ENCODE measurements at regions of chr17 and their contacts with region 1.

Region 1: DNA sequence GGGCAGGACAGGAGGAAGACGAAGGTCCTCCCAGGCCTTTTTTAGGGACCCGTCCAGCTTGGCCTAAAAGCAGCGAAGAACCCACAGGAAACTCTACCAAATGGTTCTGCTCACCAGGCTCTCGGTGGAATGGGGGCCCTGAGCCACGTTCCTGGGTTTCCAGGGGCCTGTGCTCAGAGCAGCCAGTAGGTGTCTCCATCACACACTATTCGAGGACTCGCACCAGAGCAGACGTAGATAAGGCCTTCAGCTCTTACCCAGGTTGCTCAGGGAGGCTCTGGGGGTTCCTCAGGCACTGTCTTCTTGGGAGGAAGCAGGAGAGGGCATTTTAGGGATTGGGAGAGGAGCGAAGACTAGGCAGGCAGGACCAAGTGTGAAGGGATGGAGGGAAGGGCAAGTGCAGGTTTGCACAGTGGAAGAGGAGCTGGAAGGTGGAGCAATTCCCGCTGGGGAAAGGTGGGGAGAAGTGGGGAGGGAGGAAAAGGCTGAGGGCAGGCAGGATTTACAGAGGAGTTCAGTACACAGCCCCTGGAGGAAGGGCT is 157.1 kb downstream of the RGS9 start:
- DNase-seq: peak; percentile 75
- H3K4me3 Mint-ChIP-seq: no peak overlapping the region
- H3K27ac Mint-ChIP-seq: no peak overlapping the region
- H3K4me1 Mint-ChIP-seq: peaks cover 6% of the 10 kb centered on the region
- H3K27me3 Mint-ChIP-seq: no peaks in the 10 kb centered on the region
- CTCF ChIP-seq: peak; percentile 67

Region 2: GRCh38 chr17:65463242-65463641 is 169.0 kb after region 1 on chr17:
- CTCF ChIA-PET with region 1: interaction called, 5 read pairs
- POLR2A ChIA-PET with region 1: no interaction called
- intact Hi-C with region 1: loop called (anchors 5 kb)
- DNase-seq: peak; percentile 88
- H3K4me3 Mint-ChIP-seq: peak overlapping the region; percentile 22
- H3K27ac Mint-ChIP-seq: peak overlapping the region; percentile 57
- H3K4me1 Mint-ChIP-seq: peaks cover 34% of the 10 kb centered on the region
- H3K27me3 Mint-ChIP-seq: no peaks in the 10 kb centered on the region
- CTCF ChIP-seq: no peak

Region 3: GRCh38 chr17:65556014-65556909 is 262.0 kb after region 1 on chr17:
- CTCF ChIA-PET with region 1: interaction called, 45 read pairs
- POLR2A ChIA-PET with region 1: no interaction called
- intact Hi-C with region 1: no loop called
- DNase-seq: peak; percentile 78
- H3K4me3 Mint-ChIP-seq: no peak overlapping the region
- H3K27ac Mint-ChIP-seq: no peak overlapping the region
- H3K4me1 Mint-ChIP-seq: no peaks in the 10 kb centered on the region
- H3K27me3 Mint-ChIP-seq: peaks cover 10% of the 10 kb centered on the region
- CTCF ChIP-seq: peak; percentile 84

Region 4: DNA sequence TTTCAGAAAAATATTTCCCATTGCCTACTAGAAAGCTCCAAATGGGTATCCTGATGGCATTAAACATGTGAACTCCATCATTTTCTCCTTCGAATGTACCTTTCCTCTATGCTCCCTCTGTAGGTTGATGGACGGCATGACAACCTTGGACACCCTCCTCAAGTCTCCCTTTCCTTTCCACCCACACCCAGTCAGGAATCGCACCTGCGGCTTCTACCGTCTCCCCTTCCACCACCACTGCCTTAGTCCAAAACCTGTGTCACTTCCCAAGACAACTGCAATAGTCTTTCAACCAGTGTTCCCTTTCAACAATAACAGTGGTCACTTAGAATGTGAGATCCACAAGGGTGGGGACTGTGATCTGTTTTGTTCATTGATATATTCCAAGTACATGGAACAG is 500.3 kb after region 1 on chr17:
- CTCF ChIA-PET with region 1: interaction called, 23 read pairs
- POLR2A ChIA-PET with region 1: interaction called, 3 read pairs
- intact Hi-C with region 1: loop called (anchors 1 kb)
- DNase-seq: peak; percentile 65
- H3K4me3 Mint-ChIP-seq: no peak overlapping the region
- H3K27ac Mint-ChIP-seq: no peak overlapping the region
- H3K4me1 Mint-ChIP-seq: no peaks in the 10 kb centered on the region
- H3K27me3 Mint-ChIP-seq: no peaks in the 10 kb centered on the region
- CTCF ChIP-seq: peak; percentile 64

Region 5: DNA sequence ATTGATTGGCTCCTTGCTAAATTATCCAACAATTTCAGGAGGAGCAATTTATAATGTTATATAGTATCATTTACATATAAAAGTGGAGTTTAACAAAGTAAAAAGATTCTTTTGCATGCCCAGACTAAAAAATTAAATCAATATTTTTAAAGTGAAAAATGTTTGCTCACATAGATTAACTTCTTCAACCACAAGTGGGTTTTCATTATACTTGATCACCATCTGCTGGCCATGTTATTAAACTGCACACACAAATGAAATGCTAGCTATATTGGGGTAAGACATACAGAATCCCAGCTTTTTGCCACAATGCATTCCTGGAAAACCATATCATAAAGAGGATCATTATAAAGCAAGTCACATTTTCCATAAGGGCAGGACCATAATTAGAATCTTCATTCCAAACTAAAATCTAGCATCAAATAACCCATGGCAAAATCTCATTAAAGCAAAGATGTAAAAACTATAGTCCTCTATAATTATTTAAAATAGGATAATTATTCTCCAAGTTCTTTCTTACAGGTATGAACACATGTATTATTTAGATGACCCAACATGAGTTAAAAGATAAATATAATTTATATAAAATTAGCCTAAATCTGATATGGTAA is 871.4 kb after region 1 on chr17:
- CTCF ChIA-PET with region 1: interaction called, 10 read pairs
- POLR2A ChIA-PET with region 1: no interaction called
- intact Hi-C with region 1: loop called (anchors 1 kb)
- DNase-seq: peak; percentile 61
- H3K4me3 Mint-ChIP-seq: no peak overlapping the region
- H3K27ac Mint-ChIP-seq: no peak overlapping the region
- H3K4me1 Mint-ChIP-seq: no peaks in the 10 kb centered on the region
- H3K27me3 Mint-ChIP-seq: no peaks in the 10 kb centered on the region
- CTCF ChIP-seq: peak; percentile 75

Measured in MCF 10A (cell line).